ENCODE measurements at regions of chr15 and their contacts with region 1.

Region 1: DNA sequence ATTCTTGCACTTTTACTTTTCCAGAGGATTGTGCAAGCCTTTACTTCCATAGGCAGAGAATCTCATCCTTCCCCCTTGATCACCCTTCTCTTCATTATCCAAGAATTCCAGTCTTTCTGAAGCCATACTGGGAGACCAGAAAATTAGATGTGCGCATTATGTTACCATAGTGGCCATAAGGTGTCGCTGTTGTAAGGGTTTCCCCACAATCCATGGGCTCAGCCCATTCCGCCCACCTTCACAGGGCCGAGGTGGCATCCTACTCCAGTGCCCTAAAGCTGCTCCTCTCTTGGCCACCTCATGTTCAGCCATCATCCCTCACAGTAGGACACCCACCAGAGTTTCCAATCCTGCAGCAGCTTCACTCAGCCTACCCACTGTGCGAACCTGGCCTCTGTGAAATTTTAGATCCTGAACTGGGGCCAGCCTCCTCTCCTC is 35.0 kb downstream of the CTSH start:
- DNase-seq: peak; percentile 63 to 72
- ATAC-seq: peak; percentile 63 to 83
- H3K4me3 ChIP-seq: no peak overlapping the region
- H3K27ac ChIP-seq: no peak overlapping the region
- H3K4me1 ChIP-seq: peaks cover 21% of the 10 kb centered on the region
- CTCF ChIP-seq: peak; percentile 87
- EP300 ChIP-seq: no peak
- POLR2A ChIP-seq: no peak
- RAD21 ChIP-seq: peak; percentile 75 to 81

Region 2: DNA sequence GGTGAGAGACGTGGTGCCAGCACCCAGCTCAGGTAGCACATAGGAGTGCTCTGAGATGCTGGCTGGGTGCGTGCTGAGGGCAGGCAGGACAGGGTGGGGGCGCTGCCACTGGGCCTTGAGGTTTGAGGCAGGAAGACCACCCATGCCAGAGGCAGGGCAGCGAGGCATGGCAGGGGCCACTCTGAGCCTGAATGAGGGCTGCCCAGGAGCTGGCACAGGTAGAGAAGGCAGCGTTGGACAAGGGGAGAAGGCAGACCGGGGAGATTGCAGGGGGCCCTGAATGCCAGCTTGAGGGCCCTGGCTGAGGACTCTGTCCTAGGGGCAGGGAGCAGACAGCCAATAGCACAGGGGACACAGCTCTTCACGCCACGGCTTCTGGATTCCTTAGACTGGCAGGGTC is 148.8 kb before region 1 on chr15:
- CTCF ChIA-PET with region 1: no interaction called
- POLR2A ChIA-PET with region 1: no interaction called
- DNase-seq: no peak
- ATAC-seq: no peak
- H3K4me3 ChIP-seq: no peak overlapping the region
- H3K27ac ChIP-seq: no peak overlapping the region
- H3K4me1 ChIP-seq: peaks cover 4% of the 10 kb centered on the region; the same call in 2 of the 3 replicates
- CTCF ChIP-seq: no peak
- EP300 ChIP-seq: no peak
- POLR2A ChIP-seq: no peak
- RAD21 ChIP-seq: no peak

Region 3: DNA sequence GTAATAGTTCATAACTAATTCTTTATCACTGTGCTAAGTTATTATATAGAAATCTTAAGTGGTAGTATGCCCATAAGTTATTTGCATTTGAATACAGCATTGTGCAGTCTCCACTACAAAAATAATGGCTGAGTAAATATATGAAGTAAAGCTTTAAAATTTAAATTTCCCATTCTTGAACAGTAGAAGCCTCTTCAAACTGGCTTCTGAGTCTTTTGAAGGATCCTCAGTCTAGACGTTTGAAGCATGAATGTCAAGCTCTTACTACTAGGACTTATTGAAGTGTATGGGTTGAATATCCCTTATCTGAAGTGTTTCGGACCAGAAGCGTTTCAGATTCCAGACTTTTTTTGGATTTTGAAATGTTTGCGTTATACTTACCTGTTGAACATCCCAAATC is 20.8 kb before region 1 on chr15:
- CTCF ChIA-PET with region 1: interaction called, 10 read pairs
- POLR2A ChIA-PET with region 1: interaction called, 3 read pairs
- DNase-seq: no peak
- ATAC-seq: no peak
- H3K4me3 ChIP-seq: no peak overlapping the region
- H3K27ac ChIP-seq: no peak overlapping the region
- H3K4me1 ChIP-seq: no peaks in the 10 kb centered on the region
- CTCF ChIP-seq: no peak
- EP300 ChIP-seq: no peak
- POLR2A ChIP-seq: no peak
- RAD21 ChIP-seq: no peak

Region 4: GRCh38 chr15:78922527-78923414 is 13.0 kb after region 1 on chr15:
- CTCF ChIA-PET with region 1: interaction called, 58 read pairs
- POLR2A ChIA-PET with region 1: no interaction called
- DNase-seq: no peak
- ATAC-seq: no peak
- H3K4me3 ChIP-seq: no peak overlapping the region
- H3K27ac ChIP-seq: no peak overlapping the region
- H3K4me1 ChIP-seq: no peaks in the 10 kb centered on the region
- CTCF ChIP-seq: no peak
- EP300 ChIP-seq: no peak
- POLR2A ChIP-seq: no peak
- RAD21 ChIP-seq: no peak

Region 5: DNA sequence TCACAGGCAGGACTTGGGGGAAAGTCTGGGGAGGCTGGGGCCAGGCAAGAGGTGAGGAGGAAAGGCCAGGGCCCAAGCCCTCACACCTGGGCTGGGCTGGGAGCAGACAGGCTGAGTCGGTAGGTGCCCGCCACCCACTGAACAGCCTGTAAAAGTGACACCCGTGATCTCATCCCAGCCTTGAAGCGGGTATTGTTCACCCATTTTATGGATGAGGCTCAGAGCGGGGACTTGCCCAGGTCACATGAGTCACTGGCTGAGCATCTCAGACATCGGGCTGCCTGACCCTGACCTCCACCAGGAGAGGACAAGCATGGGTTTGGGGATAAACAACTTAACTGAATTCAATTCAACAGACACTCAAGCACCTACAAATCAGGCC is 87.1 kb after region 1 on chr15:
- CTCF ChIA-PET with region 1: interaction called, 11 read pairs
- POLR2A ChIA-PET with region 1: no interaction called
- DNase-seq: peak in 1 of 2 experiments; percentile 73
- ATAC-seq: peak in 1 of 2 experiments; percentile 51; a peak in 3 of 6 replicates
- H3K4me3 ChIP-seq: no peak overlapping the region
- H3K27ac ChIP-seq: peak overlapping the region; percentile 65 to 74
- H3K4me1 ChIP-seq: peaks cover 18% of the 10 kb centered on the region
- CTCF ChIP-seq: no peak
- EP300 ChIP-seq: no peak
- POLR2A ChIP-seq: no peak
- RAD21 ChIP-seq: no peak

Region 6: GRCh38 chr15:79028411-79028964 is 118.7 kb after region 1 on chr15:
- CTCF ChIA-PET with region 1: interaction called, 37 read pairs
- POLR2A ChIA-PET with region 1: no interaction called
- DNase-seq: peak; percentile 51 to 54
- ATAC-seq: peak in 1 of 2 experiments; percentile 77; a peak in 3 of 6 replicates
- H3K4me3 ChIP-seq: no peak overlapping the region
- H3K27ac ChIP-seq: no peak overlapping the region
- H3K4me1 ChIP-seq: no peaks in the 10 kb centered on the region
- CTCF ChIP-seq: peak; percentile 92
- EP300 ChIP-seq: no peak
- POLR2A ChIP-seq: no peak
- RAD21 ChIP-seq: peak; percentile 92 to 98